ENCODE measurements at regions of chr14 and their contacts with region 1.

Region 1: DNA sequence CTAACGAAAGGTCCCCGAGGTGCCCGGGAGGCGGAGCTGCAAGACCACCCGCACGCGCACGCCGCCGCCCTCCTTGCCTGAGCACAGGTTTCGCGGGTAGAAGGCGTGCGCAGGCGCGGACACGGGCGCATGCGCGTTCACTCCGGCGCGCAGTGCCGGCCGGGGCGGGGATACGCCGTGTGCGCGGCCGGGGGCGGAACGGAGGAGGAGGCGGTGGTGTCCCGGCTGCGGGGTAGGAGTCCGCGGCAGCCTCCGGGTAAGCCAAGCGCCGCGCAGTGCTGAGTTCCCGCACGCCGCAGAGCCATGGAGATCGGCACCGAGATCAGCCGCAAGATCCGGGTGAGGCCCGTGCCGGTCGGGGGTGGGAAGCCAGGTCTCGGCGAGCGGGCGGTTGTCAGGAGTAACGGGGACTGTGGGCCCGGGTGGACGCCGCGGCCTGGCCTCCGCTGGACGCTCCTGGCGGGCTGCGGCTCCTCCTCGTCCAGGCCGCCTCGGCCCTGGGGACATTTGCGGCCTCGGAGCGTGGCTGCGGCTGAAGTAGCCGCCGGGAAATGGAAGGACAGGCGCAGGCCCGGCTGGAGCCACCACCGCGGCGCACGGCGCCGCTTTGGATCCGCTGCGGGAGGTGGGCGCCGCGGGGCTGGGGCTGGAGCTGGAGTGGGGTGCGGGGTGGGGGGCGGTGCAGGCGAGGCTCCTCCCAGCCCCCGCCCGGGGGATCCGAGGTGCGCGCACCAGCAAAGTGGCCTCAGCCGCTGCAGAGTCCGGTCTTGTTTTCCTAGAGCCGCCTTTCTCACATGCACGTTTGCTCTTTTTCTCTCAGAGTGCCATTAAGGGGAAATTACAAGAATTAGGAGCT is at the start of gene ZC3H14:
- DNase-seq: peak; percentile 85
- H3K4me3 Mint-ChIP-seq: peak within 1 kb of the TSS; percentile 77
- H3K27ac Mint-ChIP-seq: peak within 1 kb of the TSS; percentile 49
- H3K4me1 Mint-ChIP-seq: peaks cover 18% of the 10 kb centered on the region
- H3K27me3 Mint-ChIP-seq: no peaks in the 10 kb centered on the region
- CTCF ChIP-seq: no peak
- total RNA-seq, gene ZC3H14: 64.5 and 72.6 TPM in 2 replicates

Region 2: GRCh38 chr14:88351966-88352691 is 210.9 kb before region 1 on chr14:
- CTCF ChIA-PET with region 1: no interaction called
- POLR2A ChIA-PET with region 1: no interaction called
- intact Hi-C with region 1: no loop called
- DNase-seq: no peak
- H3K4me3 Mint-ChIP-seq: no peak overlapping the region
- H3K27ac Mint-ChIP-seq: no peak overlapping the region
- H3K4me1 Mint-ChIP-seq: no peaks in the 10 kb centered on the region
- H3K27me3 Mint-ChIP-seq: no peaks in the 10 kb centered on the region
- CTCF ChIP-seq: no peak

Region 3: GRCh38 chr14:88551094-88551870 is 11.8 kb before region 1 on chr14:
- CTCF ChIA-PET with region 1: interaction called, 7 read pairs
- POLR2A ChIA-PET with region 1: interaction called, 39 read pairs
- intact Hi-C with region 1: no loop called
- DNase-seq: peak; percentile 89
- H3K4me3 Mint-ChIP-seq: peak overlapping the region; percentile 78
- H3K27ac Mint-ChIP-seq: peak overlapping the region; percentile 42
- H3K4me1 Mint-ChIP-seq: no peaks in the 10 kb centered on the region
- H3K27me3 Mint-ChIP-seq: no peaks in the 10 kb centered on the region
- CTCF ChIP-seq: peak; percentile 20

Region 4: GRCh38 chr14:88613552-88614010 is 50.5 kb after region 1 on chr14:
- CTCF ChIA-PET with region 1: no interaction called
- POLR2A ChIA-PET with region 1: interaction called, 5 read pairs
- intact Hi-C with region 1: loop called (anchors 5 kb)
- DNase-seq: peak; percentile 42
- H3K4me3 Mint-ChIP-seq: no peak overlapping the region
- H3K27ac Mint-ChIP-seq: peak overlapping the region; percentile 75
- H3K4me1 Mint-ChIP-seq: peaks cover 12% of the 10 kb centered on the region
- H3K27me3 Mint-ChIP-seq: no peaks in the 10 kb centered on the region
- CTCF ChIP-seq: no peak

Region 5: DNA sequence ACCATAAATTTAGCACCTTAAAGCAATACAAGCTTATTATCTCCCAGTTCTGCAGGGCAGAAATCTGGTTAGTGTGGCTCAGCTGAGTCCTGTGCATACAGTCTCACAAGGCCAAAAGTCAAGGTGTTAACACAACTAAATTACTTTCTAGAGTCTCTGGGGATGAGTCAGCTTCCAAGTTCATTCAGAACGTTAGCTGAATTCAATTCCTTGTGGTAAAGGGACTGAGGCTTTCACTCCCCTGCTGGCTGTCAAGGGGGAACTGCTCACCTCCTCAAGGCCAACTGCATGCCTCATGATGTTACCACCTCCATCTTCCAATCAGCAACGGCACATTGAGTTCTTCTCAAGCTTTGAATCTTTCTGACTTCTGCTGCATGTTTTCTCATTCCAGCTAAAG is 202.1 kb after region 1 on chr14:
- CTCF ChIA-PET with region 1: no interaction called
- POLR2A ChIA-PET with region 1: no interaction called
- intact Hi-C with region 1: no loop called
- DNase-seq: no peak
- H3K4me3 Mint-ChIP-seq: no peak overlapping the region
- H3K27ac Mint-ChIP-seq: no peak overlapping the region
- H3K4me1 Mint-ChIP-seq: no peaks in the 10 kb centered on the region
- H3K27me3 Mint-ChIP-seq: no peaks in the 10 kb centered on the region
- CTCF ChIP-seq: no peak